ENCODE measurements at regions of chr9 and their contacts with region 1.

Region 1: GRCh38 chr9:78035383-78035993 is 3.9 kb upstream of the GNAQ start:
- DNase-seq: peak; percentile 21 to 54
- ATAC-seq: peak in 3 of 4 donors; percentile 17 to 60 (median 41)
- H3K4me3 ChIP-seq: no peak overlapping the region
- H3K27ac ChIP-seq: no peak overlapping the region
- H3K4me1 ChIP-seq: peaks cover 8% of the 10 kb centered on the region
- H3K27me3 ChIP-seq: no peaks in the 10 kb centered on the region
- CTCF ChIP-seq: peak; percentile 90

Region 2: DNA sequence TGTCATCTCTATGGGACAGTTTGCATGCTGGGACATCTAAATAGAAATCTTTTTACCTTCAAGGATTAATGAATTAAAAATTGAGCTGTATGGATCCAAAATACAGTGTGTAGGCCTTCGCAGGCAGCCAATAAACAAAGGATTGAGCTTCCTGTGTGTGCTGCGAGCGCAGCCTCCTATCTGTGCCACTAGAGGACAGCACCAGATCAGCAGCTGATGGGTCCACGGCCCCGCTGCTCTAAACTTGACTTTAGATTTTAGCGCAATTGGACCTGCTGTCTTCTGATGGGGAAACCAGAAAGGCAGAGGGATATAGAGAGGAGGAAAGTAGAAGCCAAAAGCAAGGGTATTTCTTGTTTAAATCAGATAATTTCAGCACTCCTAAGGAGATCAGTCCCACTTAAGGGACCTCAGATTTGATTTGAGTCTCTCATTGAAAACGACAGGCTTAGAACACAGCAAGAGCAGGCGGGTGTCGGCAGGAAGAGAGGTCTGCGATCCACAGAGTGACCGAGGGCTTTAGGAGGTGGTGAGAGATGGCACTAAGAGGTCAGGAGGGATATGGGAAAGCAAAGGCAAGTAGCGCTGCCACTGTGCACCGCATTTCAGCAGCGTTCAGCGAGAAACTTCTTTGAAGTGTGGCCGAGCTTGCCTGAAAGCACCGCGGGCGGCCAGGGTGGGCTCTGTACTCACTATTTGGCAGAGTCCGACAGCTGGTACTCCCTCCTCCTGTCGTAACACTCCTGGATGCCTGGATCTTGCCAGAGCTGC is 601.6 kb before region 1 on chr9:
- intact Hi-C with region 1: loop called (anchors 5 to 10 kb)
- DNase-seq: peak; percentile 50 to 68
- ATAC-seq: peak; percentile 70 to 90 (median 81)
- H3K4me3 ChIP-seq: no peak overlapping the region
- H3K27ac ChIP-seq: no peak overlapping the region
- H3K4me1 ChIP-seq: no peaks in the 10 kb centered on the region
- H3K27me3 ChIP-seq: peaks cover 0 to 3% (median 0%) of the 10 kb centered on the region in 3 donors
- CTCF ChIP-seq: peak; percentile 92

Region 3: GRCh38 chr9:77751341-77752091 is 284.0 kb before region 1 on chr9:
- intact Hi-C with region 1: loop called in 1 of 2 experiments (anchors 10 kb)
- DNase-seq: no peak
- ATAC-seq: peak; percentile 48 to 79 (median 71)
- H3K4me3 ChIP-seq: no peak overlapping the region
- H3K27ac ChIP-seq: no peak overlapping the region
- H3K4me1 ChIP-seq: no peaks in the 10 kb centered on the region
- H3K27me3 ChIP-seq: no peaks in the 10 kb centered on the region
- CTCF ChIP-seq: peak; percentile 55

Region 4: DNA sequence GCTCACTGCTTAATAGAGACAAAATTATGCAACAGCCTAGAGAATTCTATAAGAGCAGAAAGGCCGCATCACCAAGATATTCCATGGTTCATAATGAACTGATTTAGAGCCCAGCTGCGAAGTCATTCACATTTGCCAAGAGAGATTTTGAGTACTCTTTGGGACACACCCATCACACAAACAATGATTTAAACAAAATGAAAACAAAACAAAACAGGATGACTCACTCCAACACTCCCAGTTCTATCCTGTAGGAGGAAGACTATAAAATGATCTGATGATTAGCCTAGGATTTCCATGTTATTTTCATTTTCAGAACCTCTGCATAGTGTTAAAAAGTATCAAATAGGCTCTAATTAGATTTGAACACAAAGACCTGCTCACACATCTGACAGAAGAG is 241.6 kb before region 1 on chr9:
- intact Hi-C with region 1: no loop called
- DNase-seq: no peak
- ATAC-seq: peak in 2 of 4 donors; percentile 34 to 44
- H3K4me3 ChIP-seq: no peak overlapping the region
- H3K27ac ChIP-seq: no peak overlapping the region
- H3K4me1 ChIP-seq: no peaks in the 10 kb centered on the region
- H3K27me3 ChIP-seq: no peaks in the 10 kb centered on the region
- CTCF ChIP-seq: no peak

Region 5: DNA sequence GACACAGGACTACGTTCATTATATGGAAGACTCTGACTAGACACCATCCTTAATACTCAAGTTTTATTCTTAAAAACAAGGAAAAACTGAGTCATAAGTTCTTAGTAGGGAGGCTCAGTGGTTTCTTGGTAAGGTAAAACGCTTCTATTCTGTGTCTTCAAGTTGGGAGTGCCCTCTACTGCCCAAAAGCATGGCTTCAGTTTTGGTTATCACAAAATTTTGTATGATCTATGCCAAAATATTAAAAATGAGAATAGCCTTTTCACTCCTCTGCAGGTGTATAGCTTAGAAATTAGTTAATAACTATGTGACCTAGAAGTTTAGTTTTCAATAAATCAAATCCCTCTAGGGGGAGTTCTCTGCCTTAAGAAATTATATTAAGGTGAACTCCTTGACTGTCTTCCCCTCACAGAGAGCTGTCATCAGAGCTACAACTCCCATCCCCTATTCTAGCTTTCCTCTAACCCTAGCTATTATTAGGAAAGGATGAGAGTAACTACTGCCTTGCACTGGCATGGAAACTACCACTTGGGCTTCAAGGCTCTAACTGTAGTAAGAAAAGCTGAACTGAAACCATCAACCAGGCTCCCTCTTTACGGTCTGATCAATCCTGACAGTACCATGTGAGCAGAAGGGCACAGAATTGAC is 193.6 kb before region 1 on chr9:
- intact Hi-C with region 1: loop called (anchors 5 to 10 kb)
- DNase-seq: no peak
- ATAC-seq: peak in 3 of 4 donors; percentile 53 to 73 (median 65)
- H3K4me3 ChIP-seq: no peak overlapping the region
- H3K27ac ChIP-seq: no peak overlapping the region
- H3K4me1 ChIP-seq: peaks cover 14% of the 10 kb centered on the region
- H3K27me3 ChIP-seq: no peaks in the 10 kb centered on the region
- CTCF ChIP-seq: peak; percentile 38

Region 6: GRCh38 chr9:77977210-77977611 is 58.3 kb before region 1 on chr9:
- intact Hi-C with region 1: loop called (anchors 2 to 5 kb)
- DNase-seq: peak; percentile 57 to 74
- ATAC-seq: peak in 3 of 4 donors; percentile 41 to 51 (median 51)
- H3K4me3 ChIP-seq: no peak overlapping the region
- H3K27ac ChIP-seq: no peak overlapping the region
- H3K4me1 ChIP-seq: peaks cover 48% of the 10 kb centered on the region
- H3K27me3 ChIP-seq: no peaks in the 10 kb centered on the region
- CTCF ChIP-seq: peak; percentile 46

Region 7: DNA sequence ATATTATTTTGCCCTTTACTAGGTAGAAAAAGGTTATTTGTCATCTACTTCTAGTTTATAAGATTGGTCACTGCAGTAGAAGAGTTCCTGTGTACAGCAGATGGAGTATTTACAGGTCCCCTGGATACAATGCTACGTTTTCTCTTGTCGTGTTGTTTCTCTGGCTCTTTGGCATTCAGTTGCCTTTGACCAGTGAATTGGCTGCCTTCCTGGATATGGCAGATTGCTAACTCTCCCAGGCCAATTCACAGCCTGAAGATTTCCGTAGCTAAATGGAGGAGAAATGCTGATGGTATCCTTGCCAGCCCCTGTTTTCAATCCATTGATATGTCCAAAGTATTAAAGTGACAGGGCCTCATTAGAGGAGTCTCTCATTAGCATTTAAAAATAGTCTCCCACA is 28.6 kb after region 1 on chr9:
- intact Hi-C with region 1: no loop called
- DNase-seq: no peak
- ATAC-seq: no peak
- H3K4me3 ChIP-seq: no peak overlapping the region
- H3K27ac ChIP-seq: no peak overlapping the region
- H3K4me1 ChIP-seq: no peaks in the 10 kb centered on the region
- H3K27me3 ChIP-seq: no peaks in the 10 kb centered on the region
- CTCF ChIP-seq: no peak